Sigmoid colon (tissue), 7 donors: ENCODE measurements at regions of chr4 and their contacts with region 1.

Region 1: DNA sequence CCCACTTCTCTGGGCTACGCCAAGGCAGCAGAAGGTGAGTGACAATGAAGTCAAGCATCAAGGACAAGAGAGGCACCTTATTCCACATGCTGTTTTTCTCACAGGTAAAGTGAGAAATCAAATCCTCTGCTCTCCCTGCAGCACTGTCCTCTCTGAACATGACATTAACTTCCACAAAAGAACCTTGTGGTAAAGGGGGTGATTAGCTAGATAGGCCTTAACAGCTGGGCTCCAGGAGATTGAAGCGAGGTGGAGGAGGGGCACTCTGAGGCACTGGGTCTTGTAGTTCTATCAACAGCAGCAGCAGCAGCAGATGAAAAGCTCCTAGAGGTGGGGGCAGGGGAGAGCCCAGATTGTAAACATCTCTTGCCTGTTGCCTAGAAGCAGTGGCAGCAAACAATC is 96.8 kb upstream of the CXXC4 start:
- DNase-seq: peak; percentile 69
- H3K4me3 ChIP-seq: peak overlapping the region in 1 of 4 donors; percentile 13
- H3K27ac ChIP-seq: peak overlapping the region in 2 of 4 donors; percentile 60 to 65
- H3K4me1 ChIP-seq: peaks cover 0 to 31% (median 19%) of the 10 kb centered on the region in 4 donors
- H3K27me3 ChIP-seq: no peaks in the 10 kb centered on the region
- CTCF ChIP-seq: no peak
- EP300 ChIP-seq: no peak
- POLR2A ChIP-seq: no peak

Region 2: DNA sequence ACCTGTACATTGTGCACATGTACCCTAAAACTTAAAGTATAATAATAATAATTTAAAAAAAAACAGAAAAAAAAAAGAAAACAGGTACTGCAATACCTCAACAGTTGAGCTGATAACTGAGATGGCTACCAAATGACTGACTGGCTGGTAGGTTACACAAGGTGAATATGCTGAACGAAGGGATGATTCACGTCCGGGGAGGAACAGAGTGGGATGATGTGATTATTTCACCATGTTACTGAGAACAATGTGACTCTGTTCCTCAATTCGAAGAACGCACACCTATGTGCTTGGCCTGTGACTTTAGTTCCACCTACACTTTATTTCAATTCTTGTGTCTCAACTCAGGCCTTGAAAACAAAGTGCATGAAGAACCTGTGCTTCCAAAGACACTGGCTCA is 208.6 kb before region 1 on chr4:
- intact Hi-C with region 1: no loop called
- DNase-seq: no peak
- H3K4me3 ChIP-seq: no peak overlapping the region
- H3K27ac ChIP-seq: no peak overlapping the region
- H3K4me1 ChIP-seq: no peaks in the 10 kb centered on the region
- H3K27me3 ChIP-seq: no peaks in the 10 kb centered on the region
- CTCF ChIP-seq: no peak
- EP300 ChIP-seq: no peak
- POLR2A ChIP-seq: no peak

Region 3: GRCh38 chr4:104490770-104491480 is 100.6 kb before region 1 on chr4:
- intact Hi-C with region 1: loop called (anchors 5 kb)
- DNase-seq: peak; percentile 87
- H3K4me3 ChIP-seq: peak overlapping the region; percentile 54 to 74 (median 68)
- H3K27ac ChIP-seq: peak overlapping the region; percentile 85 to 91 (median 88)
- H3K4me1 ChIP-seq: peaks cover 0 to 33% (median 19%) of the 10 kb centered on the region in 4 donors
- H3K27me3 ChIP-seq: no peaks in the 10 kb centered on the region
- CTCF ChIP-seq: no peak
- EP300 ChIP-seq: no peak
- POLR2A ChIP-seq: no peak

Region 4: GRCh38 chr4:104763554-104764222 is 172.2 kb after region 1 on chr4:
- intact Hi-C with region 1: no loop called
- DNase-seq: no peak
- H3K4me3 ChIP-seq: no peak overlapping the region
- H3K27ac ChIP-seq: no peak overlapping the region
- H3K4me1 ChIP-seq: peaks cover 0 to 9% (median 3%) of the 10 kb centered on the region in 4 donors
- H3K27me3 ChIP-seq: no peaks in the 10 kb centered on the region
- CTCF ChIP-seq: no peak
- EP300 ChIP-seq: no peak
- POLR2A ChIP-seq: no peak